GM12878 (cell line): ENCODE measurements at regions of chr18 and their contacts with region 1.

Region 1: DNA sequence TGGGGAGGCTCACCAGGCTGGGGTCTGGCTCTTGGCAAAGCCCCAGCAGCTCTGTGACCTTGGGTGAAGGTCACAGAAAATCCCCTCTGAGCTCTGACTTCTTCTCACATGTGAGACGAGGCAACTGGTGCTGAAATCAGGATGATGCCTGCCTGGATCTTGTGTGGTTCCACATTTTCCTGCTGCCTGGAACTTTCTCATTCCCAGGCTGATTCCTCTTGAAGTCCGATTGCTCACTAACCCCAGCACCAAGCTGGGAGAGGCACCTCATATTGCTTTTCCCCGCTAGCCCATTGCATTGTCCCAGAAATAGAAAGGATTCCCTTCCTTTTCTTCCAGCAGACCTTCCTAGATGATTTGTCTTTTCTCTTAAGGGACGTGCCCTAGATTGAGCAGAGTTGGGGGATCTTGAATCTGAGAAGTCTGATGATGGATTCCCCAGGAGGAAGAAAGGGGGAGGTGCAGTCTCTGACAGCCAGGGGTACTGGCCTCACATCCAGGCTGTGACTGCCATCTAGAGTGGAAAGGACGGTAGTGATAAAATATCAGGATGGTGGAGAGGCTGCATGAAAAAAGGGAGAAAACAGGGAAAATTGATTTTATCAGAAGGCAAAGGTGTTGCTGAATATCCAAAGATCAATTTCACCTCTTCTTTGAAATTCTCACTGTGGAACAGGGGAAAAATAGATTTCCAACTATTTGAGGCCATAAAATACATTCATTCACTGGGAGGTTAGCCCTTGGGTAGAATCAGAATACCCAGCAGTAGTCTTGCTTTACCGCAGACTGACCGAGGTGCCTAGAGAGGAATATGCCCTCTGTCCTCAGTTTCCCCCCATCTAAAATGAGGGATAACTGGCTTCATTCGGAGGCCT is 96.3 kb downstream of the FAM210A start:
- DNase-seq: peak; percentile 48
- ATAC-seq: peak; percentile 92
- H3K4me3 ChIP-seq: no peak overlapping the region
- H3K27ac ChIP-seq: no peak overlapping the region; the same call in 1 of the 2 replicates
- H3K4me1 ChIP-seq: peaks cover 5% of the 10 kb centered on the region
- H3K27me3 ChIP-seq: no peaks in the 10 kb centered on the region
- CTCF ChIP-seq: peak; percentile 76 to 98 (median 81)
- EP300 ChIP-seq: no peak
- POLR2A ChIP-seq: no peak
- RAD21 ChIP-seq: peak; percentile 100

Region 2: DNA sequence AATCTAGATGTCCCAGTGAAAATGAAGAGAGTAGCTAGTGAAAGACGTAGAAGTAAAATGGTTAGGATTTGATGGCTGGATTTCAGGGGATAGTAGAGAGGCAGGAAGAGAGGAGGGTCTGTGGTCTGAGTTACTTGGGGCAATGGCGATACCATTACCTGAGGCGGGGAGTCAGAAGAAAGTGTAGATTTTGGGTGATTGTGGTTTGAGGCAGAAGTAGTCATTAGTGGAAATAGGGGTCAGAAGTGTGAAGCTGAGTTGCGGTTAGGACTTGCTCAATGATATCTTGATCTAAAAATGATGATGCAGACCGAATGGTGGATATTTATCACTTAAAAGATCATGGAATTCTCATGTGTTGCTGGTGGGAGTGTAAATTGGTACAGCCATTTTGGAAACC is 597.9 kb before region 1 on chr18:
- CTCF ChIA-PET with region 1: no interaction called
- POLR2A ChIA-PET with region 1: no interaction called
- RAD21 ChIA-PET with region 1: no interaction called
- SMC1A ChIA-PET with region 1: no interaction called
- in situ Hi-C with region 1: no loop called
- intact Hi-C with region 1: no loop called
- DNase-seq: no peak
- ATAC-seq: no peak
- H3K4me3 ChIP-seq: no peak overlapping the region
- H3K27ac ChIP-seq: no peak overlapping the region
- H3K4me1 ChIP-seq: no peaks in the 10 kb centered on the region
- H3K27me3 ChIP-seq: no peaks in the 10 kb centered on the region
- CTCF ChIP-seq: no peak
- EP300 ChIP-seq: no peak
- POLR2A ChIP-seq: no peak
- RAD21 ChIP-seq: no peak

Region 3: GRCh38 chr18:13216092-13216582 is 413.9 kb before region 1 on chr18:
- CTCF ChIA-PET with region 1: interaction called, 15 read pairs
- POLR2A ChIA-PET with region 1: no interaction called
- RAD21 ChIA-PET with region 1: interaction called, 14 read pairs
- SMC1A ChIA-PET with region 1: interaction called, 10 read pairs
- in situ Hi-C with region 1: no loop called
- intact Hi-C with region 1: no loop called
- DNase-seq: peak; percentile 4
- ATAC-seq: peak; percentile 79
- H3K4me3 ChIP-seq: no peak overlapping the region
- H3K27ac ChIP-seq: no peak overlapping the region
- H3K4me1 ChIP-seq: no peaks in the 10 kb centered on the region
- H3K27me3 ChIP-seq: peaks cover 8 to 25% of the 10 kb centered on the region in 2 experiments
- CTCF ChIP-seq: peak; percentile 49 to 70 (median 57)
- EP300 ChIP-seq: no peak
- POLR2A ChIP-seq: no peak
- RAD21 ChIP-seq: peak; percentile 55

Region 4: GRCh38 chr18:13548966-13549879 is 80.9 kb before region 1 on chr18:
- CTCF ChIA-PET with region 1: interaction called, 12 read pairs
- POLR2A ChIA-PET with region 1: no interaction called
- RAD21 ChIA-PET with region 1: interaction called, 3 read pairs
- SMC1A ChIA-PET with region 1: interaction called, 12 read pairs
- in situ Hi-C with region 1: no loop called
- intact Hi-C with region 1: no loop called
- DNase-seq: no peak
- ATAC-seq: peak; percentile 89
- H3K4me3 ChIP-seq: no peak overlapping the region
- H3K27ac ChIP-seq: no peak overlapping the region
- H3K4me1 ChIP-seq: peaks cover 14% of the 10 kb centered on the region
- H3K27me3 ChIP-seq: no peaks in the 10 kb centered on the region
- CTCF ChIP-seq: no peak
- EP300 ChIP-seq: no peak
- POLR2A ChIP-seq: no peak
- RAD21 ChIP-seq: no peak

Region 5: DNA sequence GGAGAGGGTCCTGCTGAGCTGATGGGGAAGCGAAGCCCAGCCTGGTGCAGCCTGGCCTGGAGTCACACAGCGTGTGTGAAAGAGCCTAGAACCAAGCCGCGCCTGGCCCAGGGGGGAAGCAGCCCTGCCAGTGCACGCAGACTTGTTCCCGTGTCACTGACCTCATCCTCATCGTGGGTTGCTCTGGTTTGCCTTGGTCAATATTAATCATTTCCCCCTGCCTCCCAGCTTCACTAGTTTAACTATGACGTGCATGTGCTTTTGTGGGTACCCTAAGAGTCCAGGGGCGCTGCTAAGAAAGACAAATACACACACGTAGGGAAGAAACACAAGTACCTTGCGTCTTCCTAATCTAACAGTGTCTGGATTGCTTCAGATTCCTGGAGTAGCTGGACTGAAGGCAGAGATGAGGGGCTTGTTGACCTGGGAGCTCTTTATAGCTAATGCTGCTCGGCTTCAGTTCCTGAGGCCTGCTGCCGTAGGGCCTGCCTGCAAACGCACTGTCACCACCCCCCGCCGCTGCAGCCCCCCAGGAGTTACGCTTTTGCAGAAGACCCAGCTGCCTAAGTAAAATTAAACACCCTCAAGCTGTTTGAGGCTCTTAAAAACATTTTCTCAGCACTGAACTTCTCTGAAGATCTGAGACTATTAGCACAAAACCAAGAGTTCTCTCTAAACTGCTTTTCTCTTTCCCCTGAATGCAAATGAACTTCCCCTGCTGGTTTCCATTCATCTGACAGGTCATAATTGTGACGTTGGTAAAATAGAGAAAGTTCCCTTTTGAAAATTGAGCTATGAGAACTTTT is 62.9 kb before region 1 on chr18:
- CTCF ChIA-PET with region 1: interaction called, 337 read pairs
- POLR2A ChIA-PET with region 1: interaction called, 4 read pairs
- RAD21 ChIA-PET with region 1: interaction called, 161 read pairs
- SMC1A ChIA-PET with region 1: interaction called, 241 read pairs
- in situ Hi-C with region 1: no loop called
- intact Hi-C with region 1: loop called (anchors 1 kb)
- DNase-seq: peak; percentile 89
- ATAC-seq: peak; percentile 71
- H3K4me3 ChIP-seq: peak overlapping the region; percentile 57
- H3K27ac ChIP-seq: peak overlapping the region; percentile 100
- H3K4me1 ChIP-seq: peaks cover 76% of the 10 kb centered on the region
- H3K27me3 ChIP-seq: no peaks in the 10 kb centered on the region
- CTCF ChIP-seq: 0 out of 6 replicates have a peak, but pooled peaks of 1 of the 3 experiments have one; percentile 7
- EP300 ChIP-seq: peak; percentile 84 to 97; a peak in 3 of 4 replicates
- POLR2A ChIP-seq: peak; percentile 91
- RAD21 ChIP-seq: peak; percentile 21; the same call in 1 of the 2 replicates

Region 6: DNA sequence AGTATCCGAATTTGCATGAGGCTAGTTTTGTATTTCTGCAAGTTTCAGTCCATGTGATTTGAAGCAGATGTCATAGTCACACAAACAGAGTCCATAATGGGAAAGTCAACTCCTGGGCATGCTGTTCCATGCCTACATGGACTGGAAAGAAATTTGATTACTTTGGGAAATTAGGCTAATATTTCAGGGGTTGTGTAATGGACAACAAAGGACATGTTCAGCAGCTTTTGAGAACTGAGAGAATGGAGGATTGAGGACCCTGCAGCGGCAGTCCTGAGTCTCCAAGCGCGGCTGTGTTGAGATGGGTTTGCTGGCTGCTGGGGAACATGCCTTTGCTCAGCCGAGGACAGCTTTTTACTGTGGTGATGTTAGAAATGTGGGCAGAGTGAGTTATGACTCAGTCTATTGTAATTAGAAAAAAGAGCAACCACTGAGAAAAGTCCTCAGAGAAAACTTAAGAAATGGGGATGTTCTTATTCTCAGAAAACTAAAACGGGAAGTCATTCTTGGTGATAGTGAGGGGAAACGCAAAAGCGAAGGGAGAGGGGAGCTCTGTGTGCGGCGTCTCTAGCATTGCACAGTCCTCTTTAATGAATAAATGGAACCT is 52.9 kb before region 1 on chr18:
- CTCF ChIA-PET with region 1: interaction called, 4 read pairs
- POLR2A ChIA-PET with region 1: interaction called, 6 read pairs
- RAD21 ChIA-PET with region 1: interaction called, 8 read pairs
- SMC1A ChIA-PET with region 1: interaction called, 14 read pairs
- in situ Hi-C with region 1: no loop called
- intact Hi-C with region 1: no loop called
- DNase-seq: peak; percentile 90
- ATAC-seq: peak; percentile 93
- H3K4me3 ChIP-seq: peak overlapping the region; percentile 51
- H3K27ac ChIP-seq: peak overlapping the region; percentile 92
- H3K4me1 ChIP-seq: peaks cover 33% of the 10 kb centered on the region
- H3K27me3 ChIP-seq: no peaks in the 10 kb centered on the region
- CTCF ChIP-seq: no peak
- EP300 ChIP-seq: peak; percentile 89 to 93
- POLR2A ChIP-seq: peak; percentile 79
- RAD21 ChIP-seq: no peak